ENCODE measurements at regions of chr4 and their contacts with region 1.

Region 1: DNA sequence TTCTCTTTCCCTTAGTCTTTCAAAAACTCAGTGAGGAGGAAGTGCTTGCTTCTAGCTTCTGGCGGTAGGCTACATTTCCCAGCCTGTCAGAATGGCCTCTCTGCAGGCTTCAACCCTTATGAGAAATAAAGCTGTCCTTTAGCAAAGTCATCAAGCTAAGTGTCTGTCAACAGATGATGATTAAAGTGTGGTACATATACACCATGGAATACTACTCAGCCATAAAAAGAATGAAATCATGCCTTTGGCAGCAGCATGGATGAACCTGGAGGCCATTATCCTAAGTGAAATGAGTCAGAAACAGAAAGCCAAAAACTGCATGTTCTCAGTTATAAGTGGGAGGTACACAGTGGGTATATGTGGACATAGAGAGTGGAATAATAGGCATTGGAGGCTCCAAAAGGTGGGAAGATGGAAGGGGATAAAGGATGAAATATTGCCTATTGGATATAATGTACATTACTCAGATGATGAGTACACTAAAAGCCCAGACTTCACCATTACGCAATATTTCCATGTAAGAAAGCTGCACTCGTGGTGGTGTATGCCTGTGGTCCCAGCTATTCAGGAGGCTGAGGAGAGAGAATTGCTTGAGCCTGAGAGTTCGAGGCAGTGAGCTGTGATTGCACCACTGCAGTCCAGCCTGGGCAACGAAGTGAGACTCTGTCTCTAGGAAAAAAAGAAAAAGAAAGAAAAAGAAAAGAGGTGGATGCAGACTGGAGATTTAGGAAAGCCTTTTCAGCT is 7.9 kb downstream of the TRIM2 start:
- DNase-seq: no peak
- ATAC-seq: peak; percentile 6
- H3K4me3 ChIP-seq: no peak overlapping the region
- H3K4me1 ChIP-seq: peaks cover 12% of the 10 kb centered on the region
- CTCF ChIP-seq: no peak

Region 2: GRCh38 chr4:153318696-153319320 is 106.7 kb after region 1 on chr4:
- intact Hi-C with region 1: loop called in 1 of 2 experiments (anchors 10 kb)
- DNase-seq: peak in 1 of 3 donors; percentile 52
- ATAC-seq: peak; percentile 47
- H3K4me3 ChIP-seq: no peak overlapping the region
- H3K4me1 ChIP-seq: no peaks in the 10 kb centered on the region
- CTCF ChIP-seq: no peak

Measured in mucosa of descending colon (tissue), 3 donors.